AG04450 (cell line): ENCODE measurements at regions of chr10 and their contacts with region 1.

Region 1: DNA sequence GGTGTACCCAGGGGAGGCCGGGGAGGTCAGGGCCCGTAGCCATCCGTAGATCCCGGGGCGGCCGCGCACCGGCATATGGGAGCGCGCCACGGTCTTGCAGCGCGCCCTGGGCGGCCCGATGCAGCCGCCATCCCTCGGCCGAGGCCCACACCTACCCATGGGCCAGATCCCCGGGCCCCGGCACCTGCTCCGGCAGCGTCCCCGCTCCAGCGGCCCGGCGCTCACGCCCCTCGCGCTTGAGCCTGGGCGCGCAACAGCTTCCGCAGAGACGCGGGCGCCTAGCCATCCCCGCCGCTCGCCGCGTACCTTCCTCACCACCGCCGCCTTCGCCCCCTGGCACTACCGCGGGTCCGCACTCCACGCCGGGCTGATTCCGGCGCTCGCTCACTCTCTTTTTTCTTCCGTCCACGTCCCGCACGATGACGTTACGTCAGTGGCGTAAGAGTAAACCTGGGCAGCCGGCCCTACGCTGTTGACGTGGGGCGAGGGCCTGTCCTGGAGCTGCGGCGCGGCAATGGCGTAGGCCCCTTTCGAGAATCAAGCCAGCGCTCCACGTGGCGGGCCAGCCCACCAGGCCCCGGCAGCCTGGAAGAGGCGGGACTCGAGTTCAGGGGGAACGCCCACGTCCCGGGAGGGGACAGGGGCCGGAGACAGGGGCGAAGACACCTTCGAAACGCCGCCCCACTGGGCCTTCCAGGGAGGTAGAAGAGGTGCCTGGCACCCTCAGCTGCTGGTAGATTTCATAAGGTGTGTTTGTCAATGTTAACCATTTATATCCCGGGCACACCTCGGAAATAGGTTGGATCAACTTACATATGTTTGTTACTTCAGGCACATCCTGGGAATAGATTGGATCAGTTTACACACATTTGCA is at the start of gene ALDH18A1:
- DNase-seq: peak; percentile 82
- H3K4me3 ChIP-seq: peak within 1 kb of the TSS; percentile 95
- H3K27ac ChIP-seq: peak within 1 kb of the TSS; percentile 39
- H3K27me3 ChIP-seq: no peaks in the 10 kb centered on the region
- CTCF ChIP-seq: no peak
- polyA plus RNA-seq, gene ALDH18A1: 123 and 125 TPM in 2 replicates

Region 2: GRCh38 chr10:95675403-95676112 is 19.0 kb after region 1 on chr10:
- CTCF ChIA-PET with region 1: interaction called, 10 read pairs
- POLR2A ChIA-PET with region 1: interaction called, 3 read pairs
- DNase-seq: no peak
- H3K4me3 ChIP-seq: no peak overlapping the region
- H3K27ac ChIP-seq: no peak overlapping the region
- H3K27me3 ChIP-seq: no peaks in the 10 kb centered on the region
- CTCF ChIP-seq: no peak